ENCODE measurements at regions of chr7 and their contacts with region 1.

Region 1: DNA sequence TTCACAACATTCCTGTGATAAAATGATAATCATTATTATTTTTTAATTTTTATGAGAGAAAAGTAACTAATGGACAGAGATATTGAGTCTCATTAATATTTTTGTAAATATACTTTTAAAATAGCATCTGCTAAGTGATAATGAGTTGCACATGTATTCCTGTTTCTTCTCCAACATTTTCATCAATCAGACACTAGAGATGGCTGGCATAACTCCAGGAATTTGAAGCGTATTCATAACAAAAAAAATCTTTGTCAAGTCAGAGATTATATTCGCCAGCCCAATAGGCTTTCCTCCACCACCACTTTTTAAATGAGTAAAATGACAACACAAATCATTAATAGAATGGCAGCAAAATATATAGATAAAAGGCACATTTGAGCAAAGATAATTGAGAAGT is 524.0 kb upstream of the KCND2 start:
- DNase-seq: no peak
- ATAC-seq: no peak
- H3K4me3 ChIP-seq: no peak overlapping the region
- H3K4me3 Mint-ChIP-seq: no peak overlapping the region
- H3K27ac ChIP-seq: no peak overlapping the region
- H3K27ac Mint-ChIP-seq: no peak overlapping the region
- H3K4me1 ChIP-seq: no peaks in the 10 kb centered on the region
- H3K4me1 Mint-ChIP-seq: no peaks in the 10 kb centered on the region
- H3K27me3 ChIP-seq: no peaks in the 10 kb centered on the region
- H3K27me3 Mint-ChIP-seq: no peaks in the 10 kb centered on the region
- CTCF ChIP-seq: no peak

Region 2: DNA sequence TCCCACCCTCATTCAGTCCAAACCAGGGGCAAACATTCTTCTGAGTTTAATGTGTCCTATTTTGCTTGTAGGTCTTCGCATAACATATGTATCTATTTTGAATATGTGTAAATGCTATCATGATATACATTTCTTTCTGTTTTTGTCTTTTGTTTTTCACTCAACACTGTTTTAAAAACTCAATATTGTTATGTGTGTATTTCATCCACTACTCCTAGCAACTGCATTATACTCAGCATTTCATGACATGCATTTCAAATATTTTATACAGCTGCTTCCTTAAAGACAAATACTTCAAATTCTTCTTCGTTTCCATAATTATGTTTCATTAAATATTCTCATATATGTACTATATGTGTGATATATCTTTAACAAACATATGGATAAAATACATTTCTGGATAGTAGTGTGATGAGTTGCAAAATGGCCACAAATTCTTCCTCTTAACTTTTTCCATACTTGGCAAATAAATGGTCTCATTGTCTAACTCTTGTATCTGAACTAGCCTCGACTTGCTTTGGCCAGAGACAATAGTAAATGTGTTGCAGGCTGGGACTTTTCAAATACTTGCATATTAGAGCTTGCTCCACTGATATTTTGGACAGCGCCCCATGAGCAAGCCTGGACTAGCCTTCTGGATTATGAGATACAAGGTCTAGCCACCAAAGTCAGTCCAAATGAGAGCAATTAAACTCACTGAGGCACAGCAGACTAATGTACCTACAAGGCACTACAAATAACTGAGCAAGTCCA is 15.7 kb before region 1 on chr7:
- CTCF ChIA-PET with region 1: no interaction called
- POLR2A ChIA-PET with region 1: no interaction called
- intact Hi-C with region 1: loop called (anchors 1 kb)
- DNase-seq: no peak
- ATAC-seq: no peak
- H3K4me3 ChIP-seq: no peak overlapping the region
- H3K4me3 Mint-ChIP-seq: no peak overlapping the region
- H3K27ac ChIP-seq: no peak overlapping the region
- H3K27ac Mint-ChIP-seq: no peak overlapping the region
- H3K4me1 ChIP-seq: no peaks in the 10 kb centered on the region
- H3K4me1 Mint-ChIP-seq: no peaks in the 10 kb centered on the region
- H3K27me3 ChIP-seq: no peaks in the 10 kb centered on the region
- H3K27me3 Mint-ChIP-seq: no peaks in the 10 kb centered on the region
- CTCF ChIP-seq: no peak

Region 3: GRCh38 chr7:120070201-120070600 is 321.2 kb after region 1 on chr7:
- CTCF ChIA-PET with region 1: no interaction called
- POLR2A ChIA-PET with region 1: no interaction called
- intact Hi-C with region 1: no loop called
- DNase-seq: no peak
- ATAC-seq: no peak
- H3K4me3 ChIP-seq: no peak overlapping the region
- H3K4me3 Mint-ChIP-seq: no peak overlapping the region
- H3K27ac ChIP-seq: no peak overlapping the region
- H3K27ac Mint-ChIP-seq: no peak overlapping the region
- H3K4me1 ChIP-seq: no peaks in the 10 kb centered on the region
- H3K4me1 Mint-ChIP-seq: no peaks in the 10 kb centered on the region
- H3K27me3 ChIP-seq: no peaks in the 10 kb centered on the region
- H3K27me3 Mint-ChIP-seq: no peaks in the 10 kb centered on the region
- CTCF ChIP-seq: no peak